Posterior vena cava (tissue), 2 donors: ENCODE measurements at regions of chr10 and their contacts with region 1.

Region 1: DNA sequence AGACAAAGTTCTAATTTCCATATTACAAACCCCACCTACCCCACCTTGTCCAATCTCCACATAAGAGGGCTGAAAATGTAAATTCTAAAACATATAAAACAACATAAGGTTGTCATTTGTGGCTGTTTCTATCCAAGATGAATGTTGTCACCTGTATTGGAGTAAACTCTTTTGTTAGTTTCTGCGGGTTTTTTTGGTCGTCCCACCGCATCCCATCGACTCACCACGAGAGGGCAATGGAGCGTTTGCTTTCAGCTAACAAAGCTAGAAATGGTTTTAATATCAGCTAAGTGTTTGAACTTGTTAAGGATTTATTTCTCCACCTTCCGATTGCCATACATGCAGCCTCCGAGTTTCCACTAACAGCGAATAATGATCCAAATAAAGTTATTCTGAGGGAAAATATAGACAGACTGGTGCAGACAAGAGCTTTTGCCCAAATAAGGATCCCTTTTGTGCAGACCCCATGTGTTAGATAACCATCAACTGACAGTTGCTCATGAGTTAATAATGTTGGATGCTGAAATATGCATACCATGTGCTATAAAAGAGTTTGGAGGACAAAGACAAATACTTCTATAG is 137.2 kb downstream of the ARID5B start:
- DNase-seq: peak; percentile 89

Region 2: GRCh38 chr10:61903221-61903927 is 135.3 kb before region 1 on chr10:
- intact Hi-C with region 1: loop called in 1 of 2 experiments (anchors 10 kb)
- DNase-seq: peak; percentile 88

Region 3: GRCh38 chr10:62244780-62245467 is 206.2 kb after region 1 on chr10:
- intact Hi-C with region 1: loop called (anchors 5 to 10 kb)
- DNase-seq: no peak

Region 4: GRCh38 chr10:62870866-62871265 is 832.2 kb after region 1 on chr10:
- intact Hi-C with region 1: loop called in 1 of 2 experiments (anchors 5 kb)
- DNase-seq: no peak